Activated CD4-positive, alpha-beta memory T cell treated with anti-CD3 and anti-CD28 coated beads, Interleukin-2, amount 10 ng/mL, durations not matched to agents 7 days and 5 days (primary cell): ENCODE measurements at regions of chr2 and their contacts with region 1.

Region 1: DNA sequence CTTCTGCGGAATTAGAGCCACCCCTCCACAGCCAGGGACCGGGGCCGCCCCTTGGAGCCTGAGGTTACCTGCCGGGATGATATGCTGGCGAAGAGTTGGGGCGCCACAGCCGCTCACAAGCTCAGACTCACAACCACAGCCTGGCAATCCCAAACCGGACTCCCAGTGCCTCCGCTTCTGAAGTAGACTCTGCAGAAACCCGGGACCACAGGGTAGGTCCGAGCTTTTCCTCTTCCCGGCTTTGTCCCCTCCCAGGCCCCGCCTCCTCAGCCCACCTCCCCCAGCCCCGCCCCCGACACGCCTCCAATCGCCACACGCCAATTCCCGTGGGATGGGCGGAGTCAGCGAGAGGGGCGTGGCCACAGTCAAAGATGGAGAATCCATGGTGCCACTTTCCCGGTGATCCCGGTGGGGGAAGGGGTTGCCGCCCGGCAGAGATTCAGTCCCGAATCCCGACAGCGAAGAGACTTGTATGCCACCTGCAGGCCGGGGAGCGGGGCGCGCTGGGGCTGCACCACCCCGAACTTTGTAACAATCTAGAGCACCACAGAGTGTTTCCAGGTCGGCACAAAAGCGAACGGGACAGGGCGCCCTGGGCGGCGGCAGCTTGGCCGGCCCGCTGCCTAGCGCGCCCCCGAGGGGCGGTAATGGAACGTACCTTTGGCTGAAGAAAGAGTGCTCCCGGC is at the start of gene IDH1:
- DNase-seq: peak; percentile 93
- H3K4me3 Mint-ChIP-seq: peak within 1 kb of the TSS; percentile 98
- H3K27ac Mint-ChIP-seq: peak within 1 kb of the TSS; percentile 66
- H3K4me1 Mint-ChIP-seq: peaks cover 28% of the 10 kb centered on the region
- H3K27me3 Mint-ChIP-seq: peaks cover 4% of the 10 kb centered on the region
- total RNA-seq, gene IDH1: 41.3 to 44.2 TPM

Region 2: GRCh38 chr2:208118918-208119317 is 136.1 kb before region 1 on chr2:
- CTCF ChIA-PET with region 1: no interaction called
- POLR2A ChIA-PET with region 1: no interaction called
- DNase-seq: no peak
- H3K4me3 Mint-ChIP-seq: no peak overlapping the region
- H3K27ac Mint-ChIP-seq: no peak overlapping the region
- H3K4me1 Mint-ChIP-seq: peaks cover 1% of the 10 kb centered on the region
- H3K27me3 Mint-ChIP-seq: peaks cover 4% of the 10 kb centered on the region

Region 3: GRCh38 chr2:208175069-208175839 is 79.8 kb before region 1 on chr2:
- CTCF ChIA-PET with region 1: interaction called, 32 read pairs
- POLR2A ChIA-PET with region 1: interaction called, 3 read pairs
- DNase-seq: peak; percentile 59
- H3K4me3 Mint-ChIP-seq: no peak overlapping the region
- H3K27ac Mint-ChIP-seq: no peak overlapping the region
- H3K4me1 Mint-ChIP-seq: no peaks in the 10 kb centered on the region
- H3K27me3 Mint-ChIP-seq: peaks cover 14% of the 10 kb centered on the region

Region 4: GRCh38 chr2:208265801-208266552 is 11.0 kb after region 1 on chr2 and contains the start of gene PIKFYVE:
- CTCF ChIA-PET with region 1: interaction called, 82 read pairs
- POLR2A ChIA-PET with region 1: interaction called, 35 read pairs
- DNase-seq: peak; percentile 93
- H3K4me3 Mint-ChIP-seq: peak within 1 kb of the TSS; percentile 90
- H3K27ac Mint-ChIP-seq: peak within 1 kb of the TSS; percentile 96
- H3K4me1 Mint-ChIP-seq: peaks cover 52% of the 10 kb centered on the region
- H3K27me3 Mint-ChIP-seq: no peaks in the 10 kb centered on the region
- total RNA-seq, gene PIKFYVE: 36.6 to 37.2 TPM